ENCODE measurements at regions of chr1 and their contacts with region 1.

Region 1: GRCh38 chr1:11907275-11908094 is 18.7 kb downstream of the KIAA2013 start:
- DNase-seq: peak; percentile 94
- ATAC-seq: peak; percentile 65
- H3K4me3 Mint-ChIP-seq: peak overlapping the region; percentile 90
- H3K27ac Mint-ChIP-seq: peak overlapping the region; percentile 96
- H3K4me1 Mint-ChIP-seq: peaks cover 29% of the 10 kb centered on the region
- H3K27me3 Mint-ChIP-seq: peaks cover 14% of the 10 kb centered on the region
- CTCF ChIP-seq: peak; percentile 65

Region 2: DNA sequence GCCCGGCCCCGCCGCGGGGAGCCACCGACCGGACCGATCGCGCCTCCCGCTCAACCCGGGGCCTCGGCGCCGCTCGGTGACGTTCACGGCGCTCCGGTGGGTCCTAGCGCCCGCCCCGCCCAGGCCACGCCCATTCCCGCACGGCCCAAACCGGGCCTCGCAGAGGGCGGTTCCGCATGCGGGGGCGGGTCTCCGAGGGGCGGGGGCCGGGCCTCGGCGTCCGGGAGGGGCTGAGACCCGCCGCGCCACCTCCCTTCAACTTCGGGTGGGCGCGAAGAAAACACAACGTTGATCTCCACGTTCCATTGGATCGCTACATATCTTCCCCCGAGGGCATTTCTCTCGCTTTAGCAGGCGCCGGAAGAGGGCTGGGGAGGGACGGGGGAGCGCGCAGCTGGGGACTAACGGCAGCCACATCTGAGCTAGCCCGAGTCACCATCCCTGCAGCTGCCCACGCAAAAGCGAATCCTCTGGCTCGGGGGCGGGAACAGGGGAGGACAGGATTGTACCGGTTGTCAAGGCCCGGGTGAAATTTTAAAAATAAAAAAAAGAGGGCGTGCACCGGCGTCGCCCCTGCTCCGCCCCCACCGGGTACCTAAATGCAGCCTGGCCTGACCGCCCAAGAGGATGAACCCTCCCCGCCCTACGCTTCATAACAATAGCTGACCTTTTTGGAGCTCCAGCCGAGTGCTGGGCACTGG is 226.3 kb before region 1 on chr1 and contains the start of gene MAD2L2:
- CTCF ChIA-PET with region 1: no interaction called
- POLR2A ChIA-PET with region 1: interaction called, 21 read pairs
- intact Hi-C with region 1: no loop called
- DNase-seq: peak; percentile 95
- ATAC-seq: peak; percentile 88
- H3K4me3 Mint-ChIP-seq: peak within 1 kb of the TSS; percentile 84
- H3K27ac Mint-ChIP-seq: peak within 1 kb of the TSS; percentile 92
- H3K4me1 Mint-ChIP-seq: peaks cover 13% of the 10 kb centered on the region
- H3K27me3 Mint-ChIP-seq: peaks cover 4% of the 10 kb centered on the region
- CTCF ChIP-seq: no peak
- total RNA-seq, gene MAD2L2: 86.5 to 90.4 TPM

Region 3: DNA sequence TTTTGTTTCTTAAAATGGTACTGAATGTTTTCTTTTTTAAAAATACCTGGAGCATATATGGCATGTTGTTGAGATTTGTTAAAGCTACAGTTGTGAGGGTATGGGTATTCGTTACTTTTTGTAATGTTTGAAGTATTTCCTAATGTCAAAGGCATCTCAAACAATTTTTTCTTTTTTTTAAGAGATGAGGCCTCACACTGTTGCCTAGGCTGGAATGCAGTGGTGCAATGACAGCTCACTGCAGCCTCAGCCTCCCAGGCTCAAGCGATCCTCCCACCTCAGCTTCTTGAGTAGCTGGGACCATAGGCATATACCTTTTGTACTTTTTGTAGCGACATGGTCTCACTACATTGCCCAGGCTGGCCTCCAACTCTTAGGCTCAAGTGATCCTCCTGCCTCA is 85.4 kb before region 1 on chr1:
- CTCF ChIA-PET with region 1: no interaction called
- POLR2A ChIA-PET with region 1: interaction called, 12 read pairs
- intact Hi-C with region 1: no loop called
- DNase-seq: no peak
- ATAC-seq: no peak
- H3K4me3 Mint-ChIP-seq: no peak overlapping the region
- H3K27ac Mint-ChIP-seq: no peak overlapping the region
- H3K4me1 Mint-ChIP-seq: no peaks in the 10 kb centered on the region
- H3K27me3 Mint-ChIP-seq: no peaks in the 10 kb centered on the region
- CTCF ChIP-seq: no peak

Region 4: DNA sequence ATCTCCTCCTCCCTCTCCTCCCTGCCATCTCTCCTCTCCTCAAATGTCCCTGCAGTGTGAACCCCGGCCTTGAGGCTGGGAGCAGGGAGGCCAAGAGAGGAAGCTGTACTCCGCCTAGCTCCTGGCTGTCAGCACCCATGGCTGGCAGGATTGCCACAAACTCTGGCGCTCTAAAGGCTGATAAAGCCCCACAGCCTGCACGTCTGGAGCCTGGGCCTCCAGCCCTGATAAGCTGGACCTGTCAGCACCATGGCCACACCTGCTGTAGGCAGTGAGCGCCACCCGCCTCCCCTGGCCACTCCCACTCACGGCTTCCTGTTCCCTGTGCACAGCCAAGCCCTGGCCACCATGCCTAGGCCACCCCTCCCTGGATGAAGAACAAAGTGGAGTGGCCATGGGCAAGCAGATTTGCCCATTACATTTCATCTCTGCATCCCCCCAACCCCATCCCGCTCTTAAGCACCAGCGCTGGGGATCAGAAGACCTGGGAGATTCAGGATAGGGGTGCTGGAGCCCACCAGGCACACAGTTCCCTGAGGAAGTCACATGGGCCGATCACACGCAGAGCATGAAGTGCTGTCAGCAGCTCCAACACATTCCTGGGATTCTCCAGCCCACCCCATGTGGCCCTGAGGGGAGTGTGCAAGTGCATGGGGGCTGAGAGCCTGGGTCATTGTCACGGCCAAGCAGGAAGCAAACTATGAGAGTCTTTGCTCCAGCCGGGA is 24.5 kb before region 1 on chr1:
- CTCF ChIA-PET with region 1: no interaction called
- POLR2A ChIA-PET with region 1: interaction called, 33 read pairs
- intact Hi-C with region 1: no loop called
- DNase-seq: no peak
- ATAC-seq: no peak
- H3K4me3 Mint-ChIP-seq: no peak overlapping the region
- H3K27ac Mint-ChIP-seq: no peak overlapping the region
- H3K4me1 Mint-ChIP-seq: no peaks in the 10 kb centered on the region
- H3K27me3 Mint-ChIP-seq: no peaks in the 10 kb centered on the region
- CTCF ChIP-seq: no peak

Region 5: DNA sequence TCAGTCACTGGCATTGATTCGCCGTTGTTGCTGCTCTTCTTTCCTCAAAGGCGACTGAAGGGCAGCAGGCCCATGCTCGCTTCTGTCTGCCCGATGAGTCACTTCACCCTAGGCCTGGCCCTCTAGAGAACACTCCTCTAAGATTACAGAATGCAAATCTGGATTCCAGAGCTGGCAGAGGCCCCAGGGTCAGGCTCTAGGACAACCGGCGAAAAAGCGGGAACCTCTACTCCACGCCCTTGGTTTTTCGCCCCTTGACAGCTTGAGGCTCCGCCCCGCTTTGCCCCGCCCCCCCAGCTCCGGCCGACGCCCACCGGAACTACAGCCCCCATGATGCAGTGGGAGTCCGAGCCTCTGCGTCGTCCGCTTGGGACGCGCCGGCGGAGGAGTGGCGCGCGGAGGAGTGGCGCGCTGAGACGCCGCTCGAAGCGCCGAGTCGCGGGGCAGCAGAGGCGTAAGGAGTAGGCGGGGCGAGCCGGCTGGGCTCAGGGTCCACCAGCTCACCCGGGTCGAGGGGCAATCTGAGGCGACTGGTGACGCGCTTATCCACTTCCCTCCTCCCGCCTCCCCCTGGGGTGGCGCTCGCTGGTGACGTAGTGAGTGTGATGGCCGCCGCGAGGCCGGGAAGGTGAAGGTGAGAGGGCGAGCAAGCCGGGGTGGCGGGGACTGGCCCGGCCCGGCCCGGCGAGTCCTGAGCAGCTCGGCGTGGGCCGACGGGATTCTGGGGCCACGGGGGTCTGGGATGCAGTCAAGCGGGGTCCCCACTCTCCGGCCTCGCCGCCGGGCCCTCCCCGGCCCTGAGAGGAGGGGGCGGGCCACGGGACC is 72.6 kb after region 1 on chr1 and contains the start of gene MFN2:
- CTCF ChIA-PET with region 1: interaction called, 3 read pairs
- POLR2A ChIA-PET with region 1: interaction called, 195 read pairs
- intact Hi-C with region 1: loop called (anchors 2 kb)
- DNase-seq: peak; percentile 97
- ATAC-seq: peak; percentile 93
- H3K4me3 Mint-ChIP-seq: peak within 1 kb of the TSS; percentile 92
- H3K27ac Mint-ChIP-seq: peak within 1 kb of the TSS; percentile 89
- H3K4me1 Mint-ChIP-seq: peaks cover 28% of the 10 kb centered on the region
- H3K27me3 Mint-ChIP-seq: no peaks in the 10 kb centered on the region
- CTCF ChIP-seq: no peak
- total RNA-seq, gene MFN2: 51.0 to 51.1 TPM

Region 6: DNA sequence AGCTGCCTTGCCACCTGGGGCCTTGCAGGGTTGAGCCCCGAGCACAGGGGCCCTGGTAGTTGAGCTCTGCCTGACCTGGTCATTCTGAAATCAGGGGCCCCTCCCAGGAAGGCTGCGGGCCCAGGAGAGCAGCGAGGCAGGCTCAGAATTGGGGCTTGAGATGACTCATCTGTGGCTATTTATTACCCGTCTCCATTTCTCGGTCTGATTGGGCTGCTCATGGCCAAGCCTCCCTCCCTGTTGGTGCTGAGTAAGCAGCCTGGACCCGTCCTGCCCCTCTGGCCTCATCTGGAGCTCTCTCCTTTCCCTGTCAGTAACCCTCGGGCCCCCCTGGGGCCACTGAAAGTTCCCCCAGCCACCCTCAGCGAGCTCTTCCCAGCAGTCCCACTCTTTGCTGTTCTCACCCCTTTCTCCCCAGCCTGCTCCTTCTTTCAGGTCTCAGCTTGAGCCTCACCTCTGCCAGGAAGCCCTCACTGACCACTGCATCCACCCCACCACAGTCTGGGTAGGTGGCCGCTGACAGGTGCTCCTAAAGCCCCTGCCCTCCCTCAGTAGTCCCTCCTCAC is 144.6 kb after region 1 on chr1:
- CTCF ChIA-PET with region 1: interaction called, 3 read pairs
- POLR2A ChIA-PET with region 1: interaction called, 72 read pairs
- intact Hi-C with region 1: no loop called
- DNase-seq: peak; percentile 62
- ATAC-seq: peak; percentile 46
- H3K4me3 Mint-ChIP-seq: no peak overlapping the region
- H3K27ac Mint-ChIP-seq: no peak overlapping the region
- H3K4me1 Mint-ChIP-seq: peaks cover 37% of the 10 kb centered on the region
- H3K27me3 Mint-ChIP-seq: peaks cover 9% of the 10 kb centered on the region
- CTCF ChIP-seq: no peak

Region 7: DNA sequence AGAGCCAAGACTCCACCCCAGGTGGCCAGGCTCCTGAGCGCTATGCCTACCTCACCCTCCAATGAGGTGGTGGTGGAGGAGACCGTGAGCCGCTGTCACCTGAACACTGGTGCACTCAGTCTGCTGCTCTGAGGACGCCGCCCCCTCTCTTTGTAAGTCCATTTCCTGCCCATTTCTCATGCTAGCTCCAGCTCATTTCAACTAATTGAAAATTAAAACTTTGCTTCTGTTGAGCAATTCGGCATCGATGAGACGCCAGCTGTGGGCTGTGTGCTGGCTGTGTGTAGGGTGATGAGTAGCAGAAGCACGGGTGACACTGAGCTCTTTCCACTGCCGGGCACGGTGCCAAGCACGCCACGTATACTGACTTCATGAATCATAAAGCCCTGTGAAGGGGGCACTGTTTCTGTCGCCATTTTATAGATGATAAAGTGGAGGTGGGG is 270.5 kb after region 1 on chr1:
- CTCF ChIA-PET with region 1: no interaction called
- POLR2A ChIA-PET with region 1: interaction called, 41 read pairs
- intact Hi-C with region 1: no loop called
- DNase-seq: peak; percentile 99
- ATAC-seq: peak; percentile 72
- H3K4me3 Mint-ChIP-seq: peak overlapping the region; percentile 67
- H3K27ac Mint-ChIP-seq: peak overlapping the region; percentile 98
- H3K4me1 Mint-ChIP-seq: peaks cover 85% of the 10 kb centered on the region
- H3K27me3 Mint-ChIP-seq: no peaks in the 10 kb centered on the region
- CTCF ChIP-seq: no peak